MCF 10A (cell line): ENCODE measurements at regions of chr4 and their contacts with region 1.

Region 1: GRCh38 chr4:156949373-156949814 is 22.2 kb downstream of the PDGFC start:
- DNase-seq: peak; percentile 80
- H3K4me3 Mint-ChIP-seq: peak overlapping the region; percentile 51
- H3K27ac Mint-ChIP-seq: peak overlapping the region; percentile 96
- H3K4me1 Mint-ChIP-seq: peaks cover 78% of the 10 kb centered on the region
- H3K27me3 Mint-ChIP-seq: no peaks in the 10 kb centered on the region
- CTCF ChIP-seq: no peak

Region 2: DNA sequence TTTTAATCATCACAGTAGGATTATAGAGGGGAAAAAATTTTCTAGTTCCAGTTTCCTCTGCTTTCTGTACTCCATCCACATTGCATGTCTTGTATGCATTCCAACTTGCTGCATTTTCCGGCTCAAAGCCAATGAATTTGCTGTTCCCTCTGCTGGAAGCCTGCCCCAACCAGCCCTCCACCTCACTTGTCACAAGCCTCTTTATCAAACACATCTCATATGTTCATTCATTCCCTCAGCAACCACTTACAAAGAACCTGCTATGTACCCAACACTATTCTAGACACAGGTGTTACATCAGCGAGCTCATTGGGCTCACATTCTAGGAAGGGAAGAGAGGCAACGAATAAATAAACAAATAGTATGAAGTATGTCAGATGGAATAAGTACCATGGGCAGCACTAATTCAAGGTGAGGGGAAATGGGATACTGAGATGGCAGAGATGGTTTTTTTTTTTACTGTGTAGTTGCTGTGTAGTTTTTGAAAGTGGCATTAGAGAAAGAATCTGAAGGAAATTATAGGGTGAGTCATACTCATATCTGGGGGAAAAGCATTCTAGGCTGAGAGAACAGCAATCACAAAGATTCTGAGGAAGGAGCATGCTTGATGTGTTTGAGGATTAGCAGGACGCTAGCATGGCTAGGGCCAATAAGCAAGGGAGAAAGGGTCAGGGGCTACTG is 310.3 kb before region 1 on chr4:
- CTCF ChIA-PET with region 1: no interaction called
- POLR2A ChIA-PET with region 1: no interaction called
- intact Hi-C with region 1: no loop called
- DNase-seq: peak; percentile 4
- H3K4me3 Mint-ChIP-seq: no peak overlapping the region
- H3K27ac Mint-ChIP-seq: no peak overlapping the region
- H3K4me1 Mint-ChIP-seq: peaks cover 9% of the 10 kb centered on the region
- H3K27me3 Mint-ChIP-seq: no peaks in the 10 kb centered on the region
- CTCF ChIP-seq: no peak

Region 3: DNA sequence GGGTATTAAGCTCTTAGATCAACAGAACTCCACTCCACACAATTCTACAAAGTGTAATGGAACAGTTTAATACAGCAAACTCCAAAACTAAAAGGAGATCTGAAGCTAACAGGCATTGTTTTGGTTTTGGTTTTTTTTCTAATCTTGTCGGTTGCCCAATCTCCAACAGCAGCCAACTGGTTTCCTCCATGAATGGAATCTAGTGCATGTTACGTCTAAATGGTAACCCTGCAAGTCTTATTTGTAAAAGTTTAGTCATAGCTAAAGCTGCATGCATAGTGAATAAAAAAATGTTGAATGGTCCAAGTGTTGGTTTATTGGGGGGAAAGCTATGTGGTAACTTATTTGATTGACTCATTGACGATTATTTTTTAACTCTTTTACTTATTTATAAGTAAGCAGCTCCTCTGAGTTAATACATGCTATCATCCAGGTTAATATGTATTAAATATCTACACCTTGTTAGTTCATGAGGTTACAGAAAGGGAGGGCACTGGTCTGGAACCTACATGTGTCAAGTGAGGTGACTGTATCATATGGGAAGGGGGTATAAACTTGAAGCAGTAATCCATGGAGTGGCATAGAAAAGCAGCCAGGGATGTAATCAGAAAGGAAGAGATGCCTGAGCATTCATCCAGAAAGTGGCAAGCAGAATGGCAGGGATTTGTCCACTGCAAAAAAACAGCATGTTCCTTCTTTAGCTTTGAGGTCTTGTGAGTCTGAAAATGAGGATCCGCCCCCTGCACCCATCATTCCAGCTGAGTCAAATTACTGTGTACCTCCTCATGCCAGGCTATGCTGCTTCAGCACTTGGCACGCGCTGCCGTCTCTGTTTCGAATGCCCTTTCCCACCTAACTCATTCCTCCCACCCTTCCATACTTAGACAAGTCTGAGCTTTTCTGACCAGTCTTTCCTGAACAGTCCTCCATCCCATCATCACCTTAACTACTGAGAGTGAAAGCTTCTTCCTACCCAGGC is 59.5 kb before region 1 on chr4:
- CTCF ChIA-PET with region 1: interaction called, 4 read pairs
- POLR2A ChIA-PET with region 1: interaction called, 14 read pairs
- intact Hi-C with region 1: loop called (anchors 2 kb)
- DNase-seq: peak; percentile 71
- H3K4me3 Mint-ChIP-seq: peak overlapping the region; percentile 2
- H3K27ac Mint-ChIP-seq: peak overlapping the region; percentile 72
- H3K4me1 Mint-ChIP-seq: peaks cover 32% of the 10 kb centered on the region
- H3K27me3 Mint-ChIP-seq: no peaks in the 10 kb centered on the region
- CTCF ChIP-seq: no peak

Region 4: DNA sequence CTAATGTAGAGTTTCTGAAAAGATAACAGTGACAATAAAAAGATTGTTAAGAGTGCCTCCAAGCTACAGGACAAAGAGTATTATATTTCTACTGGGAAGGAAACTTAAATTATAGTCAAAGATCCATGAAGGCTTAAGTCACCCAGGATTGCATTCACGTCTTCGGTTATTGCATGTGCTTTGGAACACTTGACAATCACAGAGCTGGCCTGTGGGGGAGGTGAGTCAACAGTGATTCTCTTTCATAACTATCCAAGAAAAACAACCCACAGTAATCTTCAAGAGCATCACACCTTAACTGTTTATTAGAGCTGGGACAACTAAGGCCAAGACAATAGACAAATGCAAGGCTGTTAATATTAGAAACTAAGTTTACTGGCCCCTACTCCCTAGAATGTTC is 18.1 kb before region 1 on chr4:
- CTCF ChIA-PET with region 1: interaction called, 3 read pairs
- POLR2A ChIA-PET with region 1: interaction called, 15 read pairs
- intact Hi-C with region 1: loop called (anchors 1 kb)
- DNase-seq: peak; percentile 95
- H3K4me3 Mint-ChIP-seq: no peak overlapping the region
- H3K27ac Mint-ChIP-seq: peak overlapping the region; percentile 86
- H3K4me1 Mint-ChIP-seq: peaks cover 35% of the 10 kb centered on the region
- H3K27me3 Mint-ChIP-seq: no peaks in the 10 kb centered on the region
- CTCF ChIP-seq: no peak

Region 5: GRCh38 chr4:156983366-156983765 is 34.0 kb after region 1 on chr4:
- CTCF ChIA-PET with region 1: no interaction called
- POLR2A ChIA-PET with region 1: no interaction called
- intact Hi-C with region 1: no loop called
- DNase-seq: peak; percentile 48
- H3K4me3 Mint-ChIP-seq: no peak overlapping the region
- H3K27ac Mint-ChIP-seq: no peak overlapping the region
- H3K4me1 Mint-ChIP-seq: no peaks in the 10 kb centered on the region
- H3K27me3 Mint-ChIP-seq: no peaks in the 10 kb centered on the region
- CTCF ChIP-seq: peak; percentile 43

Region 6: GRCh38 chr4:157550048-157550447 is 600.7 kb after region 1 on chr4:
- CTCF ChIA-PET with region 1: no interaction called
- POLR2A ChIA-PET with region 1: no interaction called
- intact Hi-C with region 1: no loop called
- DNase-seq: no peak
- H3K4me3 Mint-ChIP-seq: no peak overlapping the region
- H3K27ac Mint-ChIP-seq: no peak overlapping the region
- H3K4me1 Mint-ChIP-seq: no peaks in the 10 kb centered on the region
- H3K27me3 Mint-ChIP-seq: no peaks in the 10 kb centered on the region
- CTCF ChIP-seq: no peak